Right ventricle myocardium superior (tissue), 1 donor: ENCODE measurements at regions of chr1 and their contacts with region 1.

Region 1: DNA sequence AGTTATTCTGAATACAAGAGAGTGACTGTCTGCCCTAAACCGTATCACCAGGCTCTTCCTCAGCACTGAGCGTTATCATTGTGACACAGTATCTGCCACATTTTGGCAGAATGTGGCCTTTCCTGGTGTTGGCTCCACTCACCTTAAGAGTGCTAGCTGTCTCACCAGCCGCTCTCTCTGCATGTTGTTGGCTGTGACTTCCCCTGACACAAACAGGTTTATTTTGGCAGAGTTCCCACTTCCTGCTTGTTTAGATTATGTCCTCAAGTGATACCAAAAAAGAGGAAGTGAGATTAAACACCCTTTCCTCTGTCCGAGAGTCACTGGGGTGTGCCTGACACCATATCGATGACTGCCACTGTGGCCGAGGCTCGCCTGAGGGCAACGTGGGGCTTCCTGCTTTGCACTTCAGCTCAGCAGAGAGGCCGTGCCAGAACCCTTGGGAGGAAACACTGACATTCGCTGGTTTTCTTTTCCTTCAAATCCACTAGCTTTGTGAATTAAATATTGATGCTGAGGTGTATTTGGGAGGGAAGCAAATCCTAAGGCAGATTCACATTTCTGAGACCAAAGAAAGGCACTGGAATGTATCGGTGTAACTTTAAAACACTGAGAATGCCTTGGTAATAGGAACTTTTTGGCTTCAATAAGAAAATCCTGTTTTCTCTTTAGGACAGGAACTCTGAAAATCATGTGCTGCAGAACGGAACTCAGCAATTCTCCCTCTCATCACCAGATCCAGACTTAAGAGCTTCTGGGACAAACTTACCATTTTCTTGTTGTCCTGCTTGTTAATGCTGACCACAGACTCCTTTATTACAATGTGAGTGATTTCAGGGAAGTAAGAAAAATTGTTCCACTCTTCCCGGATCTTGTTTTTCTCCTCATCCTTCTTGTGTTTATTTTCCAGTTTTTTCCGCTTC is 102.1 kb downstream of the JAK1 start:
- DNase-seq: peak; percentile 84
- ATAC-seq: peak; percentile 86

Region 2: GRCh38 chr1:65075123-65075976 is 211.1 kb after region 1 on chr1:
- intact Hi-C with region 1: loop called (anchors 10 kb)
- DNase-seq: no peak
- ATAC-seq: peak; percentile 88